ENCODE measurements at regions of chr1 and their contacts with region 1.

Region 1: GRCh38 chr1:206526064-206526911 is 19.0 kb downstream of the RASSF5 start:
- DNase-seq: no peak
- ATAC-seq: no peak
- H3K4me3 ChIP-seq: no peak overlapping the region
- H3K27ac ChIP-seq: no peak overlapping the region
- H3K4me1 ChIP-seq: peaks cover 6 to 9% of the 10 kb centered on the region in 2 experiments; a peak in 3 of 4 replicates
- H3K27me3 ChIP-seq: no peaks in the 10 kb centered on the region
- CTCF ChIP-seq: no peak
- POLR2A ChIP-seq: no peak
- RAD21 ChIP-seq: no peak

Region 2: GRCh38 chr1:206514821-206515387 is 11.4 kb before region 1 on chr1:
- CTCF ChIA-PET with region 1: no interaction called
- POLR2A ChIA-PET with region 1: no interaction called
- RAD21 ChIA-PET with region 1: no interaction called
- intact Hi-C with region 1: loop called (anchors 1 kb)
- DNase-seq: no peak
- ATAC-seq: no peak
- H3K4me3 ChIP-seq: no peak overlapping the region
- H3K27ac ChIP-seq: no peak overlapping the region
- H3K4me1 ChIP-seq: peaks cover 24 to 62% of the 10 kb centered on the region in 2 experiments
- H3K27me3 ChIP-seq: no peaks in the 10 kb centered on the region
- CTCF ChIP-seq: no peak
- POLR2A ChIP-seq: no peak
- RAD21 ChIP-seq: no peak